ENCODE measurements at regions of chr15 and their contacts with region 1.

Region 1: GRCh38 chr15:51992976-51993375 is 21.4 kb upstream of the LEO1 start:
- DNase-seq: no peak
- ATAC-seq: no peak
- H3K4me3 ChIP-seq: no peak overlapping the region
- H3K27ac ChIP-seq: no peak overlapping the region
- H3K4me1 ChIP-seq: no peaks in the 10 kb centered on the region
- H3K27me3 ChIP-seq: no peaks in the 10 kb centered on the region

Region 2: DNA sequence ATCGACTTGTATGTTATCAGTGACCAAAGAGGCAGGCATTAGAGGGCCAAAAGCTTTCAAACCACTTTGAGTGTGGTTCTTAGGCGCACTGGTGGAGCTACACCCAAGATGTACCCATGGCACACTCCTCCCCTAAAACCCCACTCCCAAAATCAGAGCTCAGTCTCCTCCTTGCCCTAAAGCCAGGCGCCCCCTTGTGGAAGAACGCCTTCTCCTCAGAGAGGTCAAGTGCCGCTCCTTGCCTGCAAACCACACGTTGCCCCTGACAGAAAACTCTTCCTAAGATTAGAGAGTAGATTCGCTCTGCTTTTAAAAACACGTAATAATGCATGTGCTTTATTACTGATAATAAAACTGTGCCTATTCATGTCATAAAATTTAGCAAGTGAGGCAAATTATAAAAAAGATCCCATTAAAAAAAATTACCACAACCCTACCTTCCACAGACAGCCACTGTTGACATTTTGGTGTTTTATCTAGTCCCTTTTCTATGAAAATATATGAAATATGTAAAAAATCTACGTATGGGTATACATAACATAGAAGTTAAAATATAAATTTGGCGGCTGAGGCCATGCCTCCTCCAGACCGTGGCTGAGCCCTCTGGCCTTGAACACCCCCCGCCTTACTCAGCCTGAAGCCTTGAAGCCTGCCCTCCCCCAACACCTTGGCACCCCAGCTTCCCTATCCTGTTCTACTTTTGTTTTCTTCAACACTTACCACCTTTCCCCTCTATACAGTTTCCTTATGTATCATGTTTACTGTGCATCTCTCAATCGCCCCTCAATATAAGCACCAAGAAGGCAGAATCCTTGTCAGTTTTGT is 86.1 kb after region 1 on chr15:
- intact Hi-C with region 1: loop called in 1 of 2 experiments (anchors 10 kb)
- DNase-seq: peak; percentile 86 to 93
- ATAC-seq: peak; percentile 77
- H3K4me3 ChIP-seq: no peak overlapping the region
- H3K27ac ChIP-seq: no peak overlapping the region
- H3K4me1 ChIP-seq: no peaks in the 10 kb centered on the region
- H3K27me3 ChIP-seq: no peaks in the 10 kb centered on the region

Region 3: DNA sequence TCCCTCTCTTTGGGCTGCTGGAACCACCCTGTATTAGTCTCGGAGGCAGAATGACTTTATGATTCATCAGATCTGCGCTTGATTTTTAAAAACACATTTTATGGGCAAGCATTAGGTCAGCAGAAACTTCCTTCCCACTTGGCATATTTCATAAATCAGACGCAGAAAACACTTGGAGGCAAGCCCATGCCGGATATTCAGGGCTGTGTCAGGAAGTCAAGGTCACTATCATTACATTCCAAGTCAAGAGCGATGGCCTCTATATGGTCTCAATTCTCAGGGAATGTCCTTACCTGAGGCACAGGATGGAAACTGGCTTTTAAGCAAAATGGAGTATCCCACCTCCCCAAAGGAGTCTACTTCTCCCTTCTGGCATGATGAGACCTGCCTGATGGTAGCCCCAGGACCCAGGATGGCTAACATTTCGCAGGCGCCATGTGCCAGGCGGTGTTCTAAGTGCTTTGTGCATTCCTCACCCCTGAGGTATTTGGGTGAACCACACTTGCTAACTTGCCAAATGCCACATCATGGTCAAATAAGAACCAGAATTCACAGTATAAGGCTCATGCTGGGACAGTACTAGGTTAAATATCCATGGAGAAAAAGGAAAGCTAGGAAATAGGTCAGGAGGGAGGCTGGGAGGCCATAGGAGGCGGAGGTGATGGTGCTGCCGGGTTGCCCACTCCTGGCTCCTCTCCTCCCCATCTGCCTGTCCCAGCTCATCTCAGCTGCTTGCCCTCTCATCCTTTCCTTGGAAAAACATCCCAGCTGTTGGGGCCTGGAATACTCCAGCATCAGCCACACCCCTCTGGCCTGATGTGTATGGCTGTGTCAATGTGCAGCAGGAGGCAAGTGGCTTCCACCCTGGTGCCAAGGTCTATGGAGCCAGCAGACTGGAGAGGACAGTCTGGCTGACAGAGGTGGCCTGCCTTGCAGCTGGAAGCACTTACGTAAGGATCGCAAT is 100.8 kb after region 1 on chr15:
- intact Hi-C with region 1: no loop called
- DNase-seq: peak in 1 of 2 donors; percentile 72
- ATAC-seq: peak; percentile 72
- H3K4me3 ChIP-seq: no peak overlapping the region
- H3K27ac ChIP-seq: peak overlapping the region in 1 of 2 donors; percentile 25
- H3K4me1 ChIP-seq: no peaks in the 10 kb centered on the region
- H3K27me3 ChIP-seq: no peaks in the 10 kb centered on the region

Measured in aorta (tissue), 5 donors.